CD8-positive, alpha-beta T cell (primary cell): ENCODE measurements at regions of chr12 and their contacts with region 1.

Region 1: DNA sequence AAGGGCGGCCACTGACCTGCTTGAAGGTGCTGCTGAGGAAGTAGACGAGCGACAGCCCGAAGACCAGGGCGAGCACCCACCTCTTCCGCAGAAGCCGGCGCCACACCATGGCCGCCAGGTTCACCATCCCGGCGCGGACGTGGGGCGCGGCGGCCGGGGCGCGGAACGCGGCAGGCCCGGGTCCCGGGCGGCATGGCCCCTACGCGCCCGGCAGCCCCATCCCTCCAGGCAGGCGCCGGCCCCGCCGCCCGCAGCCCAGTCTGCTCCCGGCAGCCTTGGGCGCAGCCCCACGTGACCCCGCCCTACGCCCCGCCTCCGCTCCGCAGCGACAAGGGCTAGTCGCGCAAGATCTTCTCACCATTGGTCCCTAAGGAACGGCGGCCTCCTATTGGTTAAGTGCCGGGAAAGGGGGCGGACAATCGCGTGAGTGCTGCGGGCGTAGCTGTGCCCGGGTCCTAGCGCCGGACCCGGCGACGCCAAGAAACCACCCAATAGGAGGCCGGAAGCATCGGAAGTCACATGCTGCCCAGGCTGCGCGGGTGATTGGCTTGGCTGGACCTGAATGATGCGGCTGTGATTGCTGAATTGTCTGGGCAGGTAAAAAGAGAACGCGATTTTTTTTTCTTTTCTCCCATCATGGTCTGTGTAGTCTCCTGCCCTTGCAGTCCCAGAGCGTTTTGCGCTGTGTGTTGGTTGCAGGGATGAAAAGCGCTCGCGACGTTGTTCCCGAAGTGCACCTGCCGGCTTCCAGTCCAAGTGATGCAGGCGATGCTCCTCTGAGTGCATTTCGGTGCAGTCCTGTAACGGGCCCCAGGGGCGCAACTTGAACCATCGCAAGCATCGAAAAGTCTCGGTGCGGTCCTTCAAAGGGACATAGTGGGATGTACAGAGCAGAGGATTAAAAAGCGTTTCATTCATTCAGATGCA is at the starts of genes RNFT2 and SPRING1:
- DNase-seq: peak; percentile 98 to 99 (median 99)
- ATAC-seq: peak; percentile 97
- H3K4me3 ChIP-seq: peak within 1 kb of the TSS; percentile 76 to 82
- H3K4me3 Mint-ChIP-seq: peak within 1 kb of the TSS; percentile 95
- H3K27ac ChIP-seq: peak within 1 kb of the TSS; percentile 55 to 61
- H3K27ac Mint-ChIP-seq: peak within 1 kb of the TSS; percentile 91
- H3K4me1 ChIP-seq: peaks cover 13% of the 10 kb centered on the region
- H3K4me1 Mint-ChIP-seq: peaks cover 39% of the 10 kb centered on the region
- H3K27me3 ChIP-seq: no peaks in the 10 kb centered on the region
- H3K27me3 Mint-ChIP-seq: no peaks in the 10 kb centered on the region
- CTCF ChIP-seq: no peak
- total RNA-seq, gene RNFT2: 3.8 to 4.1 TPM
- total RNA-seq, gene SPRING1: 14.1 to 14.4 TPM

Region 2: GRCh38 chr12:116382686-116383531 is 355.1 kb before region 1 on chr12:
- CTCF ChIA-PET with region 1: no interaction called
- POLR2A ChIA-PET with region 1: no interaction called
- intact Hi-C with region 1: no loop called
- DNase-seq: no peak
- ATAC-seq: no peak
- H3K4me3 ChIP-seq: no peak overlapping the region
- H3K4me3 Mint-ChIP-seq: no peak overlapping the region
- H3K27ac ChIP-seq: no peak overlapping the region
- H3K27ac Mint-ChIP-seq: no peak overlapping the region
- H3K4me1 ChIP-seq: no peaks in the 10 kb centered on the region
- H3K4me1 Mint-ChIP-seq: peaks cover 3% of the 10 kb centered on the region
- H3K27me3 ChIP-seq: no peaks in the 10 kb centered on the region
- H3K27me3 Mint-ChIP-seq: peaks cover 3% of the 10 kb centered on the region
- CTCF ChIP-seq: no peak

Region 3: DNA sequence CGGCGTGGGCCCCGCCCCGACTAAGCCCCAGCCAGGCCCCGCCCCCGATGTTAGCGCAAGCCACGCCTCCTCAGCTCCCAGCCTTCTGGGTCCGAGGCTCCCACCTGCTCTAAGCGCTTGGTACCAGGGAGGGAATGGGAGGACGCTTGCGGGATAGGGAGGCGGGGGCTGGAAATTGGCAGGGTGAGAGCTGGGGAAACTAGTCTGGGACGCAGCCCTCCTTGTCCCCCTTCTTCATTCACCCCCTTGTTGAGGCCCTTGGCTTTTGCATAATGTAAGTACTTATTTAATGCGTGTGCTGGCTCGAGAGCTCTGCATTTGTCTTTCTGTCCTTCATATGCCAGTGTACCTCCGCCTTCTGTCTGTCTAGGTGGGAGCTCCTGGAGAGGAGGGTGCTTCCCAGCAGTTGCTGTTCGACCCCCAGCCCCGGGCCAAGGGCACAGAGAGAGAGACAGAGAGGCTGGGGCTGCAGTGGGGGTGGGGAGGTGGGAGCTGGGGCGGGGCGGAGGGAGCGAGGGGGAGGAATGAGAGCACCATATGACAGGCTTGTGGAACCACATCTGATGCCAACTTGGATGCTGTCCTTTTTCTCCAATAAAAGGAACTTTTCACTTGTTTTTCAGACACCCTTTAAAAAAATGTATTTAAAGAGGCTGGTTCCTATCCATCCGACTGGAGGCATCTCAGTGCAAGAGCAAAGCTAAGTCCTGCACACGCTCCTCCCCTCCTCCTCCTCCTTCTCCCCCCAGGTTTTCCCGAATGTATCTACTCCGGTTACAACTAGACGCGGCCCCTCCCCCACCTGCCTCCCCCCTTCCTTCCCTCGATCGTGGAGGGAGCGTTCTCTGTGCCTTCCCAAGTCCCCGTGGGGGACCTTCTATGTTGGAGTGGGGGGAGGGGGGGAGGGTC is 204.4 kb before region 1 on chr12:
- CTCF ChIA-PET with region 1: no interaction called
- POLR2A ChIA-PET with region 1: no interaction called
- intact Hi-C with region 1: loop called in 1 of 2 experiments (anchors 10 kb)
- DNase-seq: peak; percentile 54 to 85 (median 77)
- ATAC-seq: peak; percentile 96
- H3K4me3 ChIP-seq: peak overlapping the region; percentile 59 to 70
- H3K4me3 Mint-ChIP-seq: peak overlapping the region; percentile 92
- H3K27ac ChIP-seq: no peak overlapping the region
- H3K27ac Mint-ChIP-seq: no peak overlapping the region
- H3K4me1 ChIP-seq: peaks cover 12% of the 10 kb centered on the region
- H3K4me1 Mint-ChIP-seq: peaks cover 18% of the 10 kb centered on the region
- H3K27me3 ChIP-seq: no peaks in the 10 kb centered on the region
- H3K27me3 Mint-ChIP-seq: no peaks in the 10 kb centered on the region
- CTCF ChIP-seq: no peak

Region 4: DNA sequence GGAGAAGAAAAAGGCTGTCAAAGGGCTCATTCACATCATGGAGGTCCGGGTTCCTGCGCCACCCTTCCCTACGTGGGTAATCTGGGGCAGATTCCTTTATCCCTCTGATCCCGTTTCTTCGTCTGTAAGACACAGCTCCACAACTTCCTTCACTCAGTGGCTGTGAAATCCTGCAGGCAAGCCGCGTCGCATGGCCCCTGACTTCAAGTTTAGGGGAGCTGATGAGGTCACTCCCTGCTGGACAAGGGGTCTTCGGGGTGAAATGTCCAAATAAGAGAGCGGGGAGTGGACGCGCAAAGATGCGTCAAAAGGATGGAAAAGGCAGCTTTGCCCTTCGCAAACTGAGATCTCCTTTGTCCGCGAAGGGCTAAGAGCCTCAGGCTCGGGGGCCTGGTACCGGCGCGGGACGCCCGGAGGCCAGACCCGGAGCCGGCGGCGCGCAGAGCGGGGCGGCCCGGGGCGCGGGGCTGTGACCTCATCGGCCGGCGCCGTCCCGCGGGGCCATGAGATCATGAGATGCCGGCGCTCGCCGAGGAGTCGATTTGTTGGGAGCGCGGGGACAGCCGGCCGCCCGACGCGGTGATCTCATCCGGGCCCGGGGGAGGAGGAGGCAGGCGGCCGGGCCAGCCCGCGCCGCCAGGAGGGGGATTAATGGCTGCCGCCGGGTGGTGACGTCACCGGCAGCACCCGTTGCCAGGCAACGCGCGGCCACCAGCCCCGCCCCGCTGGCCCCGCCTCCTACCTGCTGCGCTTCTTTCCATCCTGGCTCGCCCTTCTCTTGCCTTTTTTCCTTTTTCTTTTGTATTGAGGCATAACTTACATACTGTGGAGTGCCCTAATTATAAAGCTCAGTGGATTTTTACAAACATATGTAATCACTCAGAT is 81.2 kb after region 1 on chr12:
- CTCF ChIA-PET with region 1: no interaction called
- POLR2A ChIA-PET with region 1: no interaction called
- intact Hi-C with region 1: loop called (anchors 1 kb)
- DNase-seq: peak; percentile 82 to 96 (median 91)
- ATAC-seq: peak; percentile 88
- H3K4me3 ChIP-seq: peak overlapping the region; percentile 70 to 93
- H3K4me3 Mint-ChIP-seq: peak overlapping the region; percentile 89
- H3K27ac ChIP-seq: peak overlapping the region; percentile 83 to 95
- H3K27ac Mint-ChIP-seq: peak overlapping the region; percentile 96
- H3K4me1 ChIP-seq: peaks cover 18% of the 10 kb centered on the region
- H3K4me1 Mint-ChIP-seq: peaks cover 21% of the 10 kb centered on the region
- H3K27me3 ChIP-seq: peaks cover 0 to 2% of the 10 kb centered on the region in 2 experiments
- H3K27me3 Mint-ChIP-seq: peaks cover 2% of the 10 kb centered on the region
- CTCF ChIP-seq: no peak

Region 5: GRCh38 chr12:116924558-116925453 is 186.8 kb after region 1 on chr12:
- CTCF ChIA-PET with region 1: no interaction called
- POLR2A ChIA-PET with region 1: no interaction called
- intact Hi-C with region 1: loop called in 1 of 2 experiments (anchors 1 kb)
- DNase-seq: peak; percentile 4 to 90 (median 46)
- ATAC-seq: peak; percentile 87
- H3K4me3 ChIP-seq: peak overlapping the region; percentile 7 to 13
- H3K4me3 Mint-ChIP-seq: peak overlapping the region; percentile 68
- H3K27ac ChIP-seq: no peak overlapping the region
- H3K27ac Mint-ChIP-seq: peak overlapping the region; percentile 56
- H3K4me1 ChIP-seq: peaks cover 66% of the 10 kb centered on the region
- H3K4me1 Mint-ChIP-seq: peaks cover 80% of the 10 kb centered on the region
- H3K27me3 ChIP-seq: no peaks in the 10 kb centered on the region
- H3K27me3 Mint-ChIP-seq: no peaks in the 10 kb centered on the region
- CTCF ChIP-seq: no peak

Region 6: DNA sequence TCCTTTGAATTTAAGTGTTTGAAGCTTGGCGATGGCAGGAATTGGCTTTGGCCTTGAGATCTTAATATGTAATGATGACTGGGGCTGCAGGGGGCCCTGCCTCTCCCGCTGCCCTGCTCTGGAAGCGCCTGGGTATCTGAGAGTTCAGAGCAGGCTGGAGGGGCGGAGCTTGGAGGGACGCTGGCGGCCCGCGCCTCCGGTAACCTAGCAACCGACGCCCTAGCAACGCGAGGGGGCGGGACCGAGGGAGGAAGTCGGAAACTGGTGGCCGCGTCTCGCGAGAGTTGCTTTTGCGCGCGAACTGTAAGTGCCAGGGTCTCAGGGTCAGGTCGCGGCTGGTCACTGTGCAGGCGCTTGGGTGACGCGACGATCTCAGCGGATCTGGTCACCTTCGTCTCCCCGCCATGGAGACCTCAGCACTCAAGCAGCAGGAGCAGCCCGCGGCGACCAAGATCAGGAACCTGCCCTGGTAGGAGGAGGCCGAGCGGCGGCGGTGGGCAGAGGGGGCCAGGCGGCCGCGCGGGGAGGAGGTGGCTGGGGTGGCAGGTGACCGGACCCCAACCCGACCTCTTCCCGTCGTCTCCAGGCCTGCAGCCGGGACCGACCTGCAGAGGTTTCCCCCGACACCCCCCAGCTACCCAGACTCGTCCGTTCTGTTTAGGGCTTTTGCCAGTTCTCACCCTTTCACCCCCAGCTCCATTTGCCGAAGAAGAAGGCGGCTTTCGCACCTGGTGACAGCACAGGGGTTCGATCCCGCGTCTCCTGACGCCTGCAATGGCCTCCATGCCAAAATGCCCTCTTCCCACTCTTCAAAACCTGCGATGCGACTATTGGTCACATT is 1278.6 kb after region 1 on chr12 and contains the start of gene RFC5:
- CTCF ChIA-PET with region 1: no interaction called
- POLR2A ChIA-PET with region 1: no interaction called
- intact Hi-C with region 1: loop called (anchors 5 kb)
- DNase-seq: peak; percentile 94 to 99 (median 98)
- ATAC-seq: peak; percentile 97
- H3K4me3 ChIP-seq: peak within 1 kb of the TSS; percentile 88 to 98
- H3K4me3 Mint-ChIP-seq: peak within 1 kb of the TSS; percentile 90
- H3K27ac ChIP-seq: peak within 1 kb of the TSS in 1 of 2 experiments; percentile 58
- H3K27ac Mint-ChIP-seq: peak within 1 kb of the TSS; percentile 90
- H3K4me1 ChIP-seq: peaks cover 19% of the 10 kb centered on the region
- H3K4me1 Mint-ChIP-seq: peaks cover 18% of the 10 kb centered on the region
- H3K27me3 ChIP-seq: no peaks in the 10 kb centered on the region
- H3K27me3 Mint-ChIP-seq: no peaks in the 10 kb centered on the region
- CTCF ChIP-seq: no peak
- total RNA-seq, gene RFC5: 9.9 to 13.8 TPM